ENCODE measurements at regions of chr17 and their contacts with region 1.

Region 1: GRCh38 chr17:81553018-81553615 is 964 bp upstream of the FAAP100 start:
- DNase-seq: peak; percentile 95
- H3K4me3 ChIP-seq: peak overlapping the region; percentile 85
- H3K27ac ChIP-seq: peak overlapping the region; percentile 96
- H3K4me1 ChIP-seq: peaks cover 10% of the 10 kb centered on the region
- H3K27me3 ChIP-seq: no peaks in the 10 kb centered on the region
- CTCF ChIP-seq: 0 out of 2 replicates have a peak, but pooled peaks have one; percentile 11

Region 2: DNA sequence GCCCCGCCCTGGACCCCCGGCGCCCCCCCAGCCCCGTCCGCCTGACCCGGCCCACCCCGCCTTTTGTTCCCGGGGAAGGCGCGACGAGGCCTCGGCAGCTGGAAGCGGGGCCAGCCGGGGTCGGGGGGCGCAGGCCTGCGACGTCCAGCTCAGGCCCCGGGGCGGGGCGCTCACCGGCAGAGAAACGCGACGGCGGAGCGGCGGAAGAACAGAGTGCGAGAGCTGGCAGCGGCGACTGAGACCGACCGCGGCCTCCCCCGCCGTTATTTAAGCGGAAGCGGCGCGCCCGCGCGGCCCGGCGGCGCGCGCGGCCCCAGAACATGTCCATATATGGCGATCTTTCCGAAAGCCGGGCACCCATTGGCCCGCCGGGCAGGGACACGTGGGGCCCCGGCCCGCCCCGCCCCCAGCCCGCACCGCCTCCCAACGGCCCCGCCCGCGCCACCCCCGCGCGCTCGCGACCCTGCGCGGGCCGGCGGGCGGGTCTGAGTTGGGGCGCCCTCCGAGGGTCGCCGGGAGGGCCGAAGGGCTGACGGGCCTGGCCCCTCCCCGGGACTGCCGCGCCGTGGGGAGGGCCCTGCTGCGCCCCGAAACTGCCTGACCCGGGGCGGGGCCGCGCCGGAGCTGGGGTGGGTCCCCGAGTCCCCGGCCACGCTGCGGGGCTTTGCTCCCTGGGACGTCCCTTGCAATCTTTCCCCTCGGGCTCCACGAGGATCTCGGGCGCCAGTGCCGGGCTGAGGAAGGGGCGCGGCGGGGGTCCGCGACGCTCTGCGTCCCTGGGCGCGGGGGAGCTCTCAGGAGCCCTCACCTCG is 40.4 kb before region 1 on chr17 and contains the start of gene ACTG1:
- CTCF ChIA-PET with region 1: no interaction called
- POLR2A ChIA-PET with region 1: interaction called, 4 read pairs
- intact Hi-C with region 1: loop called (anchors 5 kb)
- DNase-seq: peak; percentile 95
- H3K4me3 ChIP-seq: peak within 1 kb of the TSS; percentile 79
- H3K27ac ChIP-seq: peak within 1 kb of the TSS; percentile 99
- H3K4me1 ChIP-seq: peaks cover 26% of the 10 kb centered on the region
- H3K27me3 ChIP-seq: no peaks in the 10 kb centered on the region
- CTCF ChIP-seq: no peak
- total RNA-seq, gene ACTG1: 2,855 and 3,247 TPM in 2 replicates

Region 3: GRCh38 chr17:81722184-81723120 is 169.3 kb after region 1 on chr17:
- CTCF ChIA-PET with region 1: no interaction called
- POLR2A ChIA-PET with region 1: no interaction called
- intact Hi-C with region 1: no loop called
- DNase-seq: no peak
- H3K4me3 ChIP-seq: no peak overlapping the region
- H3K27ac ChIP-seq: no peak overlapping the region
- H3K4me1 ChIP-seq: peaks cover 11% of the 10 kb centered on the region
- H3K27me3 ChIP-seq: no peaks in the 10 kb centered on the region
- CTCF ChIP-seq: no peak

Region 4: DNA sequence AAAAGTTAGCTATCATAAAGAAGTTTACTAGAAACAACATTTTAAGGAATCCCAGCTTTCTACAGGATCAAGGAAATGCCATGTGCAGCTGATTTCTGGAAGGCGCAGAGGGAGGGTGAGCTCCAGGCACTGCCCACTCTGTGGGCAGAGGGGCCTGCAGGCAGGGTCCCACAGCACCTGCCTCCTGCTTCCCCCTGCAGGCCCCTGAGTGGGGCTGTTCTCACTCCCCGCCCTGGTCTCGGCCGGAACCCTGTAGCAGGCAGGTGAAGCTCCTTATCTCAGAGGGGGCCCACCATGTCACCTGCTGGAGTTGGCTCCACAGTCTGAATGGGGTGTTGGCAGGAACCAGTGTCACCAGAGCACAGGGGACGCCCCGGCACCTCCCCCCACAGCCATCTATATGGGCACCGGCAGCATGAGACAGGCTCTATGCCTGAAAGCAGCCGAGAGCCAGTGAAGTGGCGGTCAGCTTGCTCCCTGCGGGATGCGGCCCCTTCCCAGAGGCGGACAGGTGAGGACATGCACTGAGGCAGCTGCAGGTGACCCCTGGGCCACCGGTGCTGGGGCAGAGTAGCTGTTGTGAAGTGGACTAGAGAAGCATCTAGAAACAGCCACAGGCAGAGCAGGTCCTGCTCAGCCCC is 592.6 kb after region 1 on chr17:
- CTCF ChIA-PET with region 1: no interaction called
- POLR2A ChIA-PET with region 1: no interaction called
- intact Hi-C with region 1: no loop called
- DNase-seq: no peak
- H3K4me3 ChIP-seq: no peak overlapping the region
- H3K27ac ChIP-seq: no peak overlapping the region
- H3K4me1 ChIP-seq: peaks cover 8% of the 10 kb centered on the region
- H3K27me3 ChIP-seq: no peaks in the 10 kb centered on the region
- CTCF ChIP-seq: no peak

Measured in A673 (cell line).